AG04450 (cell line): ENCODE measurements at regions of chr3 and their contacts with region 1.

Region 1: GRCh38 chr3:43855674-43856299 is 165.0 kb downstream of the ABHD5 start:
- DNase-seq: peak; percentile 24
- H3K4me3 ChIP-seq: no peak overlapping the region
- H3K27ac ChIP-seq: no peak overlapping the region
- H3K27me3 ChIP-seq: no peaks in the 10 kb centered on the region
- CTCF ChIP-seq: peak; percentile 69

Region 2: GRCh38 chr3:43676441-43676840 is 179.3 kb before region 1 on chr3:
- CTCF ChIA-PET with region 1: no interaction called
- POLR2A ChIA-PET with region 1: no interaction called
- DNase-seq: no peak
- H3K4me3 ChIP-seq: no peak overlapping the region
- H3K27ac ChIP-seq: no peak overlapping the region
- H3K27me3 ChIP-seq: no peaks in the 10 kb centered on the region
- CTCF ChIP-seq: no peak

Region 3: DNA sequence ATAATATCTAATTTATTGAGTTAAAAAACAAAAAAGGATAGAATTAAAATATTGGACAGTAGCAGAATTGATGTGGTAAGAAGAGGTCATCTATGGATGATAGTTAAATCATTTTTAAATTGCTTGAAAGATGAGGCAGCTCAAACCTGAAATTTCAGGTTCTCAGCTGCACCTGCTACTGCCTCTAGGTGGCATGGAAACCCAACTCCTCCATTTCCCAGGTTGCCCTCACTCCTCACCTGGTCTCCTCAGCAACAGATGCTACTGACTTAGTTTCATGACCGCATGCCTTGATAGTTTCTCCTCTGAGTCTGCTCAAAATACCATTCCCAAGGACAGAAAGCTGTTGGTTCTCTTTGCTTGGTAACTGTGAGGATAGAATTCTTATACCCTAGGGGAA is 16.9 kb before region 1 on chr3:
- CTCF ChIA-PET with region 1: interaction called, 21 read pairs
- POLR2A ChIA-PET with region 1: no interaction called
- DNase-seq: no peak
- H3K4me3 ChIP-seq: no peak overlapping the region
- H3K27ac ChIP-seq: no peak overlapping the region
- H3K27me3 ChIP-seq: peaks cover 12% of the 10 kb centered on the region
- CTCF ChIP-seq: no peak